Natural killer cell (primary cell): ENCODE measurements at regions of chr1 and their contacts with region 1.

Region 1: DNA sequence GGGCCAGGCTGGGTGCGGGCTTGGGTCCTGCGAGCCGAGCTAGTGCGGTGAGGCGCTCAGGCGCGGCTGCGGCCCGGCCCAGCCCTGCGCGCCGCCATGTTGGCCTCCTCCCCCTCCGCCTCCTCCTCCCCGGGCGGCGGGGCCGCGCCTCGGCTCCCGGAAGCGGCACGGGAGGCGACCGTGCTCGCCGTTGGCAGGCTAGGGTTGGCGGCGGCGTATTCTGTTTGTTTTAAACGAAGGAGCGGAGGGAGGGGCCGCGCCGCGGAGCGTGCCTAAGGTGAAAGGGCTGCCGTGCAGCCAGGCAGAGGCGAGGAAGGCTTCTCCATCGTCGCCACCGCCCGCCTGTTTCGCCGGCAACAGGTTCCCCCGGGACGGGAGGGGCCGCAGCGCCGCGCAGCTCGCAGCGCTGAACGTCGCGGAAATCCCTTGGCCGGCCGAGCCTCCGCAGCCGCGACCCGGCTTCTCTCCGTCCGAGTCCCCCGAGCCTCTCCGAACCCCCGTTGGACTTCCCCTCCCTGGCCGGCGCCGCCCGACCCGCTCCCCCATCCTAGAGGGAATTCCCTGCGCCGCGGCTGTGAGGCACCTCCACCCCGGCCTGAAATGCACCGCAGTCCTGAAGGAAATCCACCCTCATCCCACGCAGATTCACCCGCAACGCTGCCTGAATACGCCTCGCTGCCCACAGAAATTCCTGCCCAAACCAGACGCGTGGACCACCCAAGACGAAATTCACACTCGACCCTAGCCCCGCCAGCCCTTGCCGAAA is at the start of gene USP24:
- DNase-seq: peak; percentile 76 to 93
- ATAC-seq: peak; percentile 82 to 92 (median 91)
- H3K4me3 ChIP-seq: peak within 1 kb of the TSS; percentile 82
- H3K4me3 Mint-ChIP-seq: peak within 1 kb of the TSS; percentile 97
- H3K27ac ChIP-seq: peak within 1 kb of the TSS; percentile 97
- H3K27ac Mint-ChIP-seq: peak within 1 kb of the TSS; percentile 98 to 99
- H3K4me1 ChIP-seq: peaks cover 34% of the 10 kb centered on the region
- H3K4me1 Mint-ChIP-seq: peaks cover 68 to 69% of the 10 kb centered on the region in 2 donors
- H3K27me3 ChIP-seq: no peaks in the 10 kb centered on the region
- H3K27me3 Mint-ChIP-seq: no peaks in the 10 kb centered on the region
- CTCF ChIP-seq: no peak
- total RNA-seq, gene USP24: 155 TPM

Region 2: GRCh38 chr1:54965624-54966340 is 249.7 kb before region 1 on chr1:
- intact Hi-C with region 1: no loop called
- DNase-seq: peak in 1 of 2 donors; percentile 12
- ATAC-seq: peak; percentile 77 to 90 (median 80)
- H3K4me3 ChIP-seq: no peak overlapping the region
- H3K4me3 Mint-ChIP-seq: peak overlapping the region; percentile 52
- H3K27ac ChIP-seq: no peak overlapping the region
- H3K27ac Mint-ChIP-seq: peak overlapping the region in 1 of 2 donors; percentile 69
- H3K4me1 ChIP-seq: peaks cover 12% of the 10 kb centered on the region
- H3K4me1 Mint-ChIP-seq: peaks cover 12% of the 10 kb centered on the region in 2 donors
- H3K27me3 ChIP-seq: no peaks in the 10 kb centered on the region
- H3K27me3 Mint-ChIP-seq: peaks cover 12 to 17% of the 10 kb centered on the region in 2 donors
- CTCF ChIP-seq: no peak

Region 3: DNA sequence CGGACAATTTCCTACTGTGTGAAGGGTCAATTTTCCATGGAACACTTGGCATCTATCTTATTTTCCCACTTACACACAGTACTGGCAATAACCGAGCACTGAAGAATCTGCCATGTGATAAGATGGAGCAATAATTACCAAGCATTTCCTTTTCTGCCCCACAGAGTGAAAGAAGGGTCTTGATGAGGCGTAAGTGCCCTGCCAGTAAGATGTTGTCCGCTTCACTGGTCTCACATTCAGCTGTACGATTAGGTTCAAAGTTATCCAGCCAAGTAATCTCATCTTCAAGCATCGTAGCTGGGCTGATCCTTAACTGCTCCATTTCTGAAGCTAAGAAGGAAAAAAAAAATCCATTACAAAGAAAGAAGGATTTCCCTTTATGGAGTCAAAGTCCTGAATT is 108.3 kb before region 1 on chr1:
- intact Hi-C with region 1: no loop called
- DNase-seq: no peak
- ATAC-seq: no peak
- H3K4me3 ChIP-seq: no peak overlapping the region
- H3K4me3 Mint-ChIP-seq: no peak overlapping the region
- H3K27ac ChIP-seq: no peak overlapping the region
- H3K27ac Mint-ChIP-seq: peak overlapping the region; percentile 48 to 72
- H3K4me1 ChIP-seq: no peaks in the 10 kb centered on the region
- H3K4me1 Mint-ChIP-seq: peaks cover 5% of the 10 kb centered on the region in 2 donors
- H3K27me3 ChIP-seq: no peaks in the 10 kb centered on the region
- H3K27me3 Mint-ChIP-seq: no peaks in the 10 kb centered on the region
- CTCF ChIP-seq: no peak

Region 4: GRCh38 chr1:55188909-55189308 is 26.5 kb before region 1 on chr1:
- intact Hi-C with region 1: loop called (anchors 2 kb)
- DNase-seq: no peak
- ATAC-seq: peak in 1 of 3 donors; percentile 64
- H3K4me3 ChIP-seq: no peak overlapping the region
- H3K4me3 Mint-ChIP-seq: peak overlapping the region; percentile 10
- H3K27ac ChIP-seq: no peak overlapping the region
- H3K27ac Mint-ChIP-seq: peak overlapping the region; percentile 70 to 84
- H3K4me1 ChIP-seq: peaks cover 5% of the 10 kb centered on the region
- H3K4me1 Mint-ChIP-seq: peaks cover 70 to 84% of the 10 kb centered on the region in 2 donors
- H3K27me3 ChIP-seq: no peaks in the 10 kb centered on the region
- H3K27me3 Mint-ChIP-seq: no peaks in the 10 kb centered on the region
- CTCF ChIP-seq: no peak

Region 5: DNA sequence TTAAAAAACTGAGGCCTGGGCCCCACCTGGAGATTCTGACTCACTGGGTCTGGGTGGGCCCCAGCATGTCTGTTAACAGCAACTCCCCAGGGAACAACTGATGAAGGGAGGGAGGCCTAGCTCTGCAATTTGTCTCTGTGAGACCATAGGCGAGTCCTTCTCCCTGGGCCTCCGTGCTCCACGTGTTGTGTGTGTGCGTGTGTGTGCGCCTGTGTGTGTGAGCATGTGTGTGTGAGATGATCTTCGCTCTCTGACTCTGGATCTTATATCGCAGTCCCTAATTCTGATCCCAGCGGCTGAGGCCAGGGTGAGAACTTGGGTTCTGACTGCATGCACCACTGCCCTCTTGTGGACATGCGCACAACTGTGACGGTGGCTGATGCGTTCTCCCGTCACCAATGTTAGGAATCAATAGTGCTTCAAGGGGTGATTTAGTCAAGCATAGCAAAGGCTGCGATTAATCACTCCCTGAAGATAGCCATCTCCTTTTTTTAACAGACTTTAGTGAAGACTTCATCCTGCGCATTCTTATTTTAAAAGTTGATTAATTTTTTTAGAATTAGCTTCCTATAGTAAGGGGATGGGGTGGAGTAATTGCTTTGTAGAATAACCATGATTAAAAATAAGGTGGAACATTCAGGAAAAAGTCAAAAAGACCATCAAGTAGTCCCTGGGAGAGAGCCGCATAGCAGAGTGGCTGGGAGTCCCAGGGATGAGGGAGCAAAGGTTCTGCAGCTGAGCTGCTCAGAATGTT is 62.1 kb after region 1 on chr1:
- intact Hi-C with region 1: loop called (anchors 5 kb)
- DNase-seq: peak; percentile 66 to 90
- ATAC-seq: peak; percentile 88 to 97 (median 93)
- H3K4me3 ChIP-seq: no peak overlapping the region
- H3K4me3 Mint-ChIP-seq: no peak overlapping the region
- H3K27ac ChIP-seq: no peak overlapping the region
- H3K27ac Mint-ChIP-seq: peak overlapping the region; percentile 8 to 88
- H3K4me1 ChIP-seq: peaks cover 5% of the 10 kb centered on the region
- H3K4me1 Mint-ChIP-seq: peaks cover 45 to 52% of the 10 kb centered on the region in 2 donors
- H3K27me3 ChIP-seq: no peaks in the 10 kb centered on the region
- H3K27me3 Mint-ChIP-seq: peaks cover 0 to under 1% of the 10 kb centered on the region in 2 donors
- CTCF ChIP-seq: peak; percentile 84